IMR-90 (cell line): ENCODE measurements at regions of chr12 and their contacts with region 1.

Region 1: DNA sequence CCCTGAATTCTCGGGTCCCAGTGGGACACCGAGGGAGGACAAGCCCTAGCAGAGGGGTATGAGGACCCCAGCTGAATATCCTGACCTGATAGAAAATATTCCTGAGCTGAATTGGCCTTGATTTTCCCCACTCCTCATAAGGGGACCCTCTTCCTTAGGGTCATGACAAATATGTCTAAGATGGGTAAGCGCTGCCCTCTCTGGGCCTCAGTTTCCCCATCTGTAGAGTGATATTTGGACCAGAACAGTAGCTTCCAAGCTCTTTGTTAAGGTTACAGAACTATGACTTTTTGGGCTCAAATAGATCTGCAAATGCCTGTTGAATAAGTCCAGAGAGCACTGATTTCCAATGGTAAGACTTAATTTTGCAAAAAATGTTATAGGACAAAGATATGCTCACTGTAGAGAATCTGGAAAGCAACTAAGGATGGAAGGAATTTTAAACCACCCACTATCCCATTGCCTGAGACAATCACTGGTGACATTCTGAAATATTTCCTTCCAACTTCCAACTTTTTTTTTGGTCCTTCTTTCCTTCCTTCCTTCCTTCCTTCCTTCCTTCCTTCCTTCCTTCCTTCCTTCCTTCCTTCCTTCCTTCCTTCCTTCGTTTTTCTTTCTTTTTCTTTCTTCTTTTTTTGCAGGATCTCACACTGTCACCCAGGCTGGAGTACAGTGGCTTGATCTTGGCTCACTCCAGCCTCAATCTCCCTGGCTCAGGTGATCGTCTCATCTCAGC is 32.0 kb downstream of the MYL2 start:
- DNase-seq: no peak
- ATAC-seq: no peak
- H3K4me3 ChIP-seq: no peak overlapping the region
- H3K27ac ChIP-seq: no peak overlapping the region
- H3K4me1 ChIP-seq: no peaks in the 10 kb centered on the region
- H3K27me3 ChIP-seq: no peaks in the 10 kb centered on the region
- CTCF ChIP-seq: no peak
- POLR2A ChIP-seq: no peak
- RAD21 ChIP-seq: no peak

Region 2: GRCh38 chr12:110468212-110469048 is 420.0 kb before region 1 on chr12 and contains the starts of genes FAM216A and GPN3:
- CTCF ChIA-PET with region 1: no interaction called
- POLR2A ChIA-PET with region 1: no interaction called
- dilution Hi-C with region 1: no loop called
- in situ Hi-C with region 1: no loop called
- intact Hi-C with region 1: loop called (anchors 1 kb)
- DNase-seq: peak; percentile 98
- ATAC-seq: peak; percentile 90
- H3K4me3 ChIP-seq: peak within 1 kb of the TSS; percentile 53
- H3K27ac ChIP-seq: peak within 1 kb of the TSS; percentile 86
- H3K4me1 ChIP-seq: peaks cover 3% of the 10 kb centered on the region; the same call in 1 of the 2 replicates
- H3K27me3 ChIP-seq: no peaks in the 10 kb centered on the region
- CTCF ChIP-seq: no peak
- POLR2A ChIP-seq: peak; percentile 83
- RAD21 ChIP-seq: no peak
- total RNA-seq, gene FAM216A: 14.0 and 18.9 TPM in 2 replicates
- total RNA-seq, gene GPN3: 7.7 and 24.7 TPM in 2 replicates

Region 3: DNA sequence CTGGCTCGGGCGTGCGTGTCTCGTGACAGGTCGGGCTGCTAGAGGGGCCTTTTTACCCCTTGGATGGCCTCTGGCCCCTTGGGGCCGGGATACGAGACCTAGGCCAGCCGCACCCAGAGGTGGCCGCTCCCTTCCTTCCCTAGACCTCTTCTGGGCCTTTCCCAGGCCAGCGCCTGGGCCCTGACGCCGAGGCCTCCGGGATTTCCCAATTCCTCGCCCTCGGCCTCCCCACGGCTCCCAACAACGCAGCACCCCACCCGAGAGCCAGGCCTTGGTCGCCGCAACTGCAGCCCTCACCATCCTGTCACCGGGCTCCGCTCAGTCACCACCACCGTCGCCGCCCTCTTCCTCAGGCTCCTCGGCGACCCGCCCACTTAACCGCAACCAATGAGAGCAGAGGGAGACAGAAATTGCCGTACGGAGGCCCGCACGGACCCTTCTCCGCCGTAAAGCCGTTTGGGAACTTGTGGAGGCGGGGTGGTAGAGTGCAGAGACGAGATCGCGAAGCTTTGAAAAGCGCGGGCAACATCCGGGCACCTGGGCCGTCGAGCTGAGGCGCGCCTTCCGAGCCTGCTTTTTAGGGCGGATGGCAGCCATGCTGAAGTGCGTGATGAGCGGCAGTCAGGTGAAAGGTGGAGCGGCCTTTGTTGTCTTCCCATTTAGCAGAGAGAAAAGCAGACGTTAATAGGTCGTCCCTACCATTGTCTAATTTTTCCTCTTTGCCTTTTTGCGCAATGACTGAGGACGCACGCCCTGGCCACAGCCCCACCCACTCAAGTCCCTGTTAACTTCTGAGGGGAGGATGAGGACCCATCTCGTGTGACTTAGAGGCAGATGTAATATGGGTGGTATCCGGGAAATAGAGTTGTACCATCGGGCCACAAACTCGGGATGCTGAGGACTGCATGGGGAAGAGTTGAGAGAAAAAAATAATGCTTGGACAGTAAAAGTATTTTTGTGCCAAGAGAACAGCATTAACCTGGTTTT is 386.4 kb before region 1 on chr12 and contains the starts of genes RAD9B and VPS29:
- CTCF ChIA-PET with region 1: no interaction called
- POLR2A ChIA-PET with region 1: no interaction called
- dilution Hi-C with region 1: no loop called
- in situ Hi-C with region 1: no loop called
- intact Hi-C with region 1: loop called (anchors 5 kb)
- DNase-seq: peak; percentile 98
- ATAC-seq: peak; percentile 99
- H3K4me3 ChIP-seq: peak within 1 kb of the TSS; percentile 77
- H3K27ac ChIP-seq: peak within 1 kb of the TSS; percentile 71
- H3K4me1 ChIP-seq: no peaks in the 10 kb centered on the region
- H3K27me3 ChIP-seq: no peaks in the 10 kb centered on the region
- CTCF ChIP-seq: no peak
- POLR2A ChIP-seq: peak; percentile 87
- RAD21 ChIP-seq: no peak
- total RNA-seq, gene RAD9B: 0.18 and 0.56 TPM in 2 replicates
- total RNA-seq, gene VPS29: 102 and 150 TPM in 2 replicates

Region 4: GRCh38 chr12:110613771-110614684 is 274.4 kb before region 1 on chr12 and contains the start of gene TCTN1:
- CTCF ChIA-PET with region 1: no interaction called
- POLR2A ChIA-PET with region 1: no interaction called
- dilution Hi-C with region 1: no loop called
- in situ Hi-C with region 1: loop called (anchors 10 kb)
- intact Hi-C with region 1: no loop called
- DNase-seq: peak; percentile 91
- ATAC-seq: peak; percentile 100
- H3K4me3 ChIP-seq: peak within 1 kb of the TSS; percentile 64
- H3K27ac ChIP-seq: peak within 1 kb of the TSS; percentile 56
- H3K4me1 ChIP-seq: no peaks in the 10 kb centered on the region
- H3K27me3 ChIP-seq: no peaks in the 10 kb centered on the region
- CTCF ChIP-seq: no peak
- POLR2A ChIP-seq: peak; percentile 62; the same call in 1 of the 2 replicates
- RAD21 ChIP-seq: no peak
- total RNA-seq, gene TCTN1: 11.1 and 11.7 TPM in 2 replicates

Region 5: GRCh38 chr12:110742718-110743570 is 145.5 kb before region 1 on chr12 and contains the start of gene PPP1CC:
- CTCF ChIA-PET with region 1: interaction called, 4 read pairs
- POLR2A ChIA-PET with region 1: no interaction called
- dilution Hi-C with region 1: no loop called
- in situ Hi-C with region 1: no loop called
- intact Hi-C with region 1: loop called (anchors 1 kb)
- DNase-seq: peak; percentile 89
- ATAC-seq: peak; percentile 95
- H3K4me3 ChIP-seq: peak within 1 kb of the TSS; percentile 99
- H3K27ac ChIP-seq: peak within 1 kb of the TSS; percentile 92
- H3K4me1 ChIP-seq: peaks cover 13% of the 10 kb centered on the region
- H3K27me3 ChIP-seq: no peaks in the 10 kb centered on the region
- CTCF ChIP-seq: no peak
- POLR2A ChIP-seq: peak; percentile 93
- RAD21 ChIP-seq: no peak
- total RNA-seq, gene PPP1CC: 126 and 169 TPM in 2 replicates